Common myeloid progenitor, CD34-positive (primary cell): ENCODE measurements at regions of chr1 and their contacts with region 1.

Region 1: DNA sequence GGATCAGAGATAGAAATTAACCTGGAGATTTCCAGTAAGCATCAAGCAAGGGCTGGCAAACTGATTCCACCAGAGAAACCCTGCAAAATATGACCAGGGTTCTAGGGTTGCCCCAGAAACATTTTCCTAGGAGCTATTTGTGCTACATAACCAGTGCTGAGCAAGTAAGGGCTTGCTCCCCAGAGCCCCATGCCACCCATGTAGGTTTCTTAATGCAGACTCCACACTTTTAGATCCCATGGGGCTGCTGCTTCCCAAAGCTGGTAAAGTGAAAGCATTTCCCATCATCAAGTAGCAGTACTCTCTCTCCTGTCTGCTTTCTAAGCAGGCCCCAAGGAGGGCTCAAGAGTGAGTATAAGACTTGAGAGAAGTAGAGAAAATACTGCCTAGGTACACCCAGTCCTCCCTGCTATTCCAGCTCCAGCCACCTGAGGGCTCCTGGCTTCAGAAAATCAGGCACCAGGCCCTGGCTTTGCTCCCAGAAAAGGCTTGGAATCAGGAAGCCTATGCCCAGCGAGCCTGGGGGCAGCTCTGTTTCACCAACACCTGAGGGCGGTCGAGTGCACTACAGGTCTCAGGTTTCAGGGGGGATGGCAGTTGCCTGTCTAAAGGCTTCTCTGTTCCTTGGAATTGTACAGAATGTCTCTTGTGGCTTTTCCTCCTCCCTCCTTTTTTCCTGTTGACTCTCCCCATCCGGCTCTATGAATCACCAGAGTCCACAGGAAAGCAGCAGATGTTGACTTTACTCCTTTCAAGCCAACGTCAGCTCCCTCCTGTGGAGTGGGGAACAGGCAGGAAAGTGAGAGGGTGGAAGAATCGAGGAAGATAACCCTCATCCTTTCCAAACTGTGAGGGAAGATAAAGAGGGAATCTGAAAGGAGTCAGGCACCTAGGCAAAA is 6.2 kb upstream of the ANKRD35 start:
- DNase-seq: peak; percentile 78 to 80 (median 80)
- H3K4me3 ChIP-seq: peak overlapping the region in 1 of 7 experiments; percentile 3
- H3K27ac ChIP-seq: peak overlapping the region in 1 of 2 experiments; percentile 10
- H3K4me1 ChIP-seq: peaks cover 0 to 15% (median 9%) of the 10 kb centered on the region in 4 experiments
- H3K27me3 ChIP-seq: no peaks in the 10 kb centered on the region

Region 2: GRCh38 chr1:145858894-145859490 is 32.8 kb before region 1 on chr1 and contains the start of gene PIAS3:
- CTCF ChIA-PET with region 1: interaction called, 20 read pairs
- POLR2A ChIA-PET with region 1: interaction called, 3 read pairs
- DNase-seq: peak; percentile 91 to 97 (median 94)
- H3K4me3 ChIP-seq: peak within 1 kb of the TSS; percentile 88 to 97 (median 92)
- H3K27ac ChIP-seq: peak within 1 kb of the TSS; percentile 17 to 82
- H3K4me1 ChIP-seq: peaks cover 0 to 17% (median 15%) of the 10 kb centered on the region in 4 experiments
- H3K27me3 ChIP-seq: no peaks in the 10 kb centered on the region

Region 3: DNA sequence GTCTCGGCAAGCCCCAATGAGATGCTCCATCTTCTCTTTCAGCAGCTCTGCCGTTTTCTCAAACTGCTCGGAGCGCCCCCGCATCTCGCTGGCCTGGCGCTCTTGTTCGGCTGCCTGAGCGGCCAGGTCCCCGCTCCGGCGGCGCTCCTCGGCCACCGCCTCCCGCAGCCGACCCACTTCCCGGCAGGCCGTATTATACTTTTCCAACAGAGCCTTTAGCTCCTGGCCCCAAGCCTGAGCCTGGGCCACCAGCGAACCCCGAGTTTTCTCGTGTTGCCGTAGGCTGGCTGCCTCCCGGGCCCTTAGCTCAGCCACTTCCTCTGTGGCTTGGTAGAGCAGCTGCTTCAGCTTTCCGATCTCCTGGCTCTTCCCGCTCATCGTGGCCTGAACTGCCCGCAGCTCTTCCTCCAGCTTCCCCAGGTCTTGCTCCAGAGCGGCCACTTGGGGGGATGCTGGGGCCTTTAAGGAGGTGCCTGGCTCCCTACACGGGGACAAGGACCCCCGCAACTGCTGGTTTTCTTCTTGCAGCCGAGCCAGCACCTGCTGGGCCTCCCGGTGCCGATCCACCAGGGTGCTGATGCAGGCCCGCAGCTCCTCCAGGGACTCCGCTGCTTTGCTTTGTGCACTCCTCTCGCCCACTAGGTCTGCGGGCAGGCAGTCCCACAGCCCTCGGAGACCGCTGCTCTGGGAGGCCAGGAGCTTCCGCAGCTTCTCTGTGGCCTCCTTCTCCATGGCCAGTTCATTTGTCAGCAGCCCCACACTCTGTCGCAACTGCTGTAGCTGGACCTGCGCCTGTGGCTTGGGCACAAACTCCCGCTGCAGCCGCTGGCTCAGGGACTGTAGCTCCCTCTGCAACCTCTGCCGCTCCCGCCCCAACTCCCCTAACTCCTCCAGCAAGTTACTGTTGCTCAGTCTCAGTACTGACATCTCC is 19.6 kb before region 1 on chr1:
- CTCF ChIA-PET with region 1: interaction called, 13 read pairs
- POLR2A ChIA-PET with region 1: no interaction called
- DNase-seq: peak; percentile 31 to 70 (median 62)
- H3K4me3 ChIP-seq: peak overlapping the region; percentile 19 to 74 (median 58)
- H3K27ac ChIP-seq: peak overlapping the region in 1 of 2 experiments; percentile 33
- H3K4me1 ChIP-seq: peaks cover 0 to 25% (median 17%) of the 10 kb centered on the region in 4 experiments
- H3K27me3 ChIP-seq: peaks cover 0 to 2% (median 0%) of the 10 kb centered on the region in 5 experiments

Region 4: DNA sequence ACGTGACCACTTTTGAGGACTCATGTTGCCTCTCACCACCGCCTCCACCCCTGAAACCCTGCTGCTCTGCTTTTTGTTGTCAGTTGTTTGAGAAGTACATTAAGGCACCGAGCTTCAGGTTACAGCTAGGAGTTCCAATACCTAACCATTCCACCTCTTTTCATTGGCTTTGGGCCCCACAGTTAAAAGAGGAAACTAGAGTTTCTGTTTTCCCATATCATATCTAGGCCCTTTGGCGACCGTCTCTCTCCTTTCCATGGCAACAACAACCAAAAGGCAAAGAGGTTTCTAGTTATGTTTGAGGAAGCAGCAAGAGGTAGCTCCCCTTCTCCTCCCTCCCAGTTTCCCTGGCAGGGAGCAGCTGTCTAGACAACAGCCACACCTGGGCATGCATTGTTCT is 12.1 kb before region 1 on chr1:
- CTCF ChIA-PET with region 1: interaction called, 14 read pairs
- POLR2A ChIA-PET with region 1: no interaction called
- DNase-seq: peak; percentile 25 to 63 (median 61)
- H3K4me3 ChIP-seq: peak overlapping the region in 1 of 7 experiments; percentile 6
- H3K27ac ChIP-seq: no peak overlapping the region
- H3K4me1 ChIP-seq: peaks cover 4 to 14% (median 7%) of the 10 kb centered on the region in 4 experiments
- H3K27me3 ChIP-seq: peaks cover 0 to 5% (median 0%) of the 10 kb centered on the region in 5 experiments

Region 5: GRCh38 chr1:145906954-145907753 is 15.3 kb after region 1 on chr1:
- CTCF ChIA-PET with region 1: interaction called, 53 read pairs
- POLR2A ChIA-PET with region 1: no interaction called
- DNase-seq: no peak
- H3K4me3 ChIP-seq: no peak overlapping the region
- H3K27ac ChIP-seq: no peak overlapping the region
- H3K4me1 ChIP-seq: peaks cover 0 to 2% (median 0%) of the 10 kb centered on the region in 4 experiments
- H3K27me3 ChIP-seq: peaks cover 0 to 2% (median 0%) of the 10 kb centered on the region in 5 experiments

Region 6: GRCh38 chr1:145912128-145912641 is 20.3 kb after region 1 on chr1:
- CTCF ChIA-PET with region 1: interaction called, 53 read pairs
- POLR2A ChIA-PET with region 1: interaction called, 3 read pairs
- DNase-seq: no peak
- H3K4me3 ChIP-seq: no peak overlapping the region
- H3K27ac ChIP-seq: no peak overlapping the region
- H3K4me1 ChIP-seq: peaks cover 0 to 5% (median 1%) of the 10 kb centered on the region in 4 experiments
- H3K27me3 ChIP-seq: no peaks in the 10 kb centered on the region

Region 7: DNA sequence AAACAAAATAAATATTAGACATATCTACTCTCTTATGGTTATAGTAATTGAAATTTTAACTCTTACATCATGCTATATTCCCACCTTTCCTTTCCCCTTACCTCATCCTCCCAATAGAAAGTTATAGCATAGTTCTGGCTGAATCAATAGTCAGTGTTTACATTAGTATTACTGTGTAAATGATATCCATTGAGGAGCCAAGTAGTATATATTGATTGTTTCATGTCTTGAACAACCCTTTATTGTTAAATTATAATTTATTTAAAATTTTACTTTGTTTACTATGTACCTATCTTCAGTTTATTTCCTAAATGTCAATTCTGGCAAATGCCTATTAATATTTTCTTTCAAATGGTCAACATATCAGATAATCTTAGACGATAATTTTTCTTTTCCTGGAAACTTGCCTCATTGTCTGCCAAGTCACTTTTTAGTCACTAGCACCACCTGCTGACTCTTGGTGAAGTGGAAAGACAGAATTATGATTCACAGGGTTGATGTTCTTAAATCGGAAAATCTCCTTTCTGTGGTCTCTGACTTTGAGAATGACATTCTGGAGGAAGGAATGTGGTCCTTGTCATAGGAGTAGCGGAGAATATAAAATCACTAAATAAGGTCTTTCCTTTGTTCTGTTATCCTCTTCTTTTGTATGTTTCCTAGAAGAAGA is 121.0 kb after region 1 on chr1:
- CTCF ChIA-PET with region 1: interaction called, 22 read pairs
- POLR2A ChIA-PET with region 1: no interaction called
- DNase-seq: peak; percentile 77 to 85 (median 81)
- H3K4me3 ChIP-seq: no peak overlapping the region
- H3K27ac ChIP-seq: no peak overlapping the region
- H3K4me1 ChIP-seq: peaks cover 0 to 5% (median 1%) of the 10 kb centered on the region in 4 experiments
- H3K27me3 ChIP-seq: peaks cover 0 to 11% (median 0%) of the 10 kb centered on the region in 5 experiments